ENCODE measurements at regions of chr17 and their contacts with region 1.

Region 1: DNA sequence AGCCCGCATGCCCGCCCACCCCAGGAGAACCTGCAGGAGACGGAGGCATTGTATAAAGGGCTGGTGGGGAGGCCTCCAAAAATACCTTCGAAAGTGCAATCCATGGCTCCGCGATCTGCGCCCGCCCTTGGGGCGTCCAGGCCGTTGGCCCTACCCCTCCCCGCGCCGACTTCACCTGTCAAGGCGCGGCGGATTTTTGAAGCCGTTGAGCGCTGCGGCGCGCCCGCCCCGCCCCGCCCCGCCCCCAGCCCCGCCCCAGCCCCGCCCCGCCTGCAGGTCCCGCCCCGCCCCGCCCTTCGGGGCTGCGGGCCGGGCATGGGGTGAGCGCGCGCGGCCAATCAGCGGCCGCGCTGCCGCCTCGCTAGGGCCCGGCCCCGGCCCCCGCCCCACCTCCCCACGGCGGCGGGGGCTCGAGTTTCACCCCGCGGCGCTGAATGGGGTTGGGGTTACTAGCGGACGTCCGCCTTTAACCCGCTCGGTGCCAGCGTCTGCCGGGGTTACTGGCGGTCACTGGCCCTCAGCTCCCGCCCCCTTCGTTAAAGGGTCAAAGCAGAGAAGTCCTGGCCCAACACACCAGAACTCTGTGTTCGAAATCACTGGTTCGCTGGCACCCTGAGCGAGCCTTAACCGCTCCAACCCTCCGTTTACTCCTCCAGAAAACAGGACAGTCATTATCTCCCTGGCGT is 13.2 kb downstream of the SREBF1 start:
- DNase-seq: peak; percentile 82
- H3K4me3 Mint-ChIP-seq: peak overlapping the region; percentile 77
- H3K27ac Mint-ChIP-seq: peak overlapping the region; percentile 94
- H3K4me1 Mint-ChIP-seq: peaks cover 81% of the 10 kb centered on the region
- H3K27me3 Mint-ChIP-seq: no peaks in the 10 kb centered on the region

Region 2: GRCh38 chr17:17757391-17757791 is 66.2 kb before region 1 on chr17:
- intact Hi-C with region 1: no loop called
- DNase-seq: peak; percentile 22
- H3K4me3 Mint-ChIP-seq: no peak overlapping the region
- H3K27ac Mint-ChIP-seq: peak overlapping the region; percentile 16
- H3K4me1 Mint-ChIP-seq: peaks cover 24% of the 10 kb centered on the region
- H3K27me3 Mint-ChIP-seq: no peaks in the 10 kb centered on the region

Region 3: GRCh38 chr17:17792551-17793377 is 30.8 kb before region 1 on chr17:
- intact Hi-C with region 1: loop called (anchors 2 kb)
- DNase-seq: peak; percentile 67
- H3K4me3 Mint-ChIP-seq: no peak overlapping the region
- H3K27ac Mint-ChIP-seq: peak overlapping the region; percentile 35
- H3K4me1 Mint-ChIP-seq: peaks cover 15% of the 10 kb centered on the region
- H3K27me3 Mint-ChIP-seq: no peaks in the 10 kb centered on the region

Region 4: DNA sequence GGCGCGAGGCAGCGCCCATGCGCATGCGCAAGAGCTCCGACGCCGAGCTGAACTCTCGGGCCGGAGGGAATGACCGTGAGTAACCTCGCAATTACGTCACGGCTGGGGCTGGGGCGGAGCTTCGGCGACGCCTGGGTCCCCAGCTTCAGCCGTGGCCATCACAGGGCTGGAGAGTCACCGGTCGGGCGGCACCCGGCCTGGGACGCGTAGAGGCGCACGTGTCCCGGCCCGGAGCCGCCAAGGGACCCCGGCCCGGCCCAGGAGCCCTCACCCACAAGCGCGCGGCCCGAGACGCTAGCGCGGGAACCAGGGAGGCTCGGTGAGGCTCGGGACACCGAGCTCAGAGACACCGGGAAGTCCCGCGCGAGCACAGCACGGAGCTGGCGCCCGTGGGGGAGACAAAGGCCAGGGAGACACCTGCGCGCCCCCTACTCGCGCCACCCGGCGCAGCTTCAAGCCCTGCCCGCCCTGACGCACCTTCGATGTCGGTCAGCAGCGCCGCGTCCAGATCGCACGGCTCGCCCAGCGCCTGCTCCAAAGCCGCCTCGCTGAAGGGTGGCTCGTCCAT is 12.8 kb after region 1 on chr17:
- intact Hi-C with region 1: loop called (anchors 1 kb)
- DNase-seq: peak; percentile 95
- H3K4me3 Mint-ChIP-seq: peak overlapping the region; percentile 95
- H3K27ac Mint-ChIP-seq: peak overlapping the region; percentile 92
- H3K4me1 Mint-ChIP-seq: peaks cover 63% of the 10 kb centered on the region
- H3K27me3 Mint-ChIP-seq: no peaks in the 10 kb centered on the region

Measured in activated T-helper 2 cell treated with anti-CD3 and anti-CD28 coated beads, Interferon-gamma antibody, Interleukin-2, Interleukin-4, amounts not matched to agents 10 μg/mL and 5 μg/mL and 100 μg/mL, durations not matched to agents 14 hours and 24 hours and 36 hours (primary cell).